ENCODE measurements at regions of chr10 and their contacts with region 1.

Region 1: GRCh38 chr10:124747745-124748144 is 3.6 kb upstream of the FAM53B start:
- DNase-seq: no peak
- ATAC-seq: no peak
- H3K4me3 ChIP-seq: no peak overlapping the region
- H3K27ac ChIP-seq: no peak overlapping the region
- H3K4me1 ChIP-seq: peaks cover 14% of the 10 kb centered on the region
- H3K27me3 ChIP-seq: no peaks in the 10 kb centered on the region
- CTCF ChIP-seq: no peak

Region 2: DNA sequence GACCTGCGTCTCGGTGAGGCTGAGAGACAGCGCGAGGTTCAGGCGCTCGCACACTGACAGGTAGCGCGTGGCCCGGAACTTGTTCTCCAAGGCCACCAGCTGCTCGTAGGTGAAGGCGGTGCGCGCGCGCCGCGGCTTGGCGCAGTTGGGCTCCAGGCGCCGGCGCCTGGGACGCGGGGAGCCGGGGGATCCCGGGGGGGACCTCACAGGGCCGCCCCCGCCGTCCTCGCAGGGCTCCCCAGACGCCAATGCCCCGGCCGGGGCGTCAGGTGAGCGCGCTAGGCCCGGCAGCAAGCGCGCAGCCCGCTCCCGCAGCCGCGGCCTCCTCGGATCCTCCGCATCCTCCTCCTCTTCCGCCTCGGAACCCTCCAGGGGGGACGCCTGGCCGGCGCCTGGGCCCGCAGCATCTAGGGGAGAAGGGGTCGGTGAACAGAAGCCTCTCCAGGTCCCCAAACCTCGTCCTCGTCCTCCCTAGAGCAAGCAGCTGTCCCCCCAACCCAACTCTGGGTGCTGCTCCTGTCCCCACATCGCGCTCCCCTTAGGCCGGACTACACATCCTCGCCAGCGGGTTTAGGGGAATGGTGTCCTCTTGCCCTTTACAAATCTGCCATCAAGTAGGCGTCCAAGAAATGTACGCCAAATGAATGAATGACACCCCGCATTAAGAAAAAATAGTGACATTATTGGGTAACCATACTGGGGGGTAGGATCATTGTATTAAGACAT is 299.8 kb before region 1 on chr10:
- CTCF ChIA-PET with region 1: no interaction called
- POLR2A ChIA-PET with region 1: interaction called, 14 read pairs
- in situ Hi-C with region 1: no loop called
- intact Hi-C with region 1: no loop called
- DNase-seq: no peak
- ATAC-seq: no peak
- H3K4me3 ChIP-seq: peak overlapping the region in 1 of 2 experiments; percentile 8; a peak in 2 of 4 replicates
- H3K27ac ChIP-seq: no peak overlapping the region
- H3K4me1 ChIP-seq: peaks cover 15% of the 10 kb centered on the region
- H3K27me3 ChIP-seq: peaks cover 57% of the 10 kb centered on the region
- CTCF ChIP-seq: no peak

Region 3: GRCh38 chr10:124685261-124685660 is 62.5 kb before region 1 on chr10:
- CTCF ChIA-PET with region 1: no interaction called
- POLR2A ChIA-PET with region 1: no interaction called
- in situ Hi-C with region 1: no loop called
- intact Hi-C with region 1: no loop called
- DNase-seq: no peak
- ATAC-seq: no peak
- H3K4me3 ChIP-seq: no peak overlapping the region
- H3K27ac ChIP-seq: no peak overlapping the region
- H3K4me1 ChIP-seq: no peaks in the 10 kb centered on the region
- H3K27me3 ChIP-seq: no peaks in the 10 kb centered on the region
- CTCF ChIP-seq: no peak

Measured in Panc1 (cell line).